Vagina (tissue), 2 donors: ENCODE measurements at regions of chr5 and their contacts with region 1.

Region 1: DNA sequence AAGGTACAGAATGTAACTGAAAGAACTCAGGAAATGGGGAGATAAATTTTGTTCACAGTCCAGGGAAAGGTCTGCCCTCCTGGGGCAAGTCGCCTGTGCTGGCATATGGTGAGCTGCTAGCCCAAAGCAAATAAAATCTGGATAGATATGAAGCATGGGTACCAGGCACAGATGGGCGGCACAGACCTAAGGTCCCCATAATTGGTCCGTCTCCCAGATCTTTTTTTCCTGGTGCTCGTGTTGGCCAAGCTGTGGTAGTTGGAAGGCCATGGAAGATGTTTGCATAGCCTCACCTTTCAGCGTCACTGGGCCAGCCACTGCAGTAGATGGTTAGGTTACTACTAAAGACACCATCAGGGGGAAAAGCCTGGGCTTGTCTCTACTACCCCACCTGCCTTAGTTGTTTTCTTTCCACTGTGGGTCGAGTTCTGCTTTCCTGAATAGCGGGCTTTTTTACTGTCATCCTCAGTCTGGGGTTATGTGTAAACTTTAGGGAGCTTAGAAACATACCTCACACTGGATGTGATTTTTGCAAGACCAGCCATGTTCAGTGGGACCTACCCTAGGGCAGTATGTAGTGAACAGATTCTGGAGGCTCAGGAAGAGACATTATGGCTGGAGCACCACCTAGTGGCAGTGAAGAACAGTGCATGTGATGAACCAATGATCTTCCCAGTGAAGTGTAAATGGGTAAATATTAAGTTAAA is 24.2 kb upstream of the GLRX start:
- DNase-seq: no peak
- H3K4me3 ChIP-seq: no peak overlapping the region
- H3K27ac ChIP-seq: peak overlapping the region; percentile 50
- H3K4me1 ChIP-seq: peaks cover 19% of the 10 kb centered on the region
- H3K27me3 ChIP-seq: no peaks in the 10 kb centered on the region
- CTCF ChIP-seq: peak; percentile 93 to 95 (median 94)
- POLR2A ChIP-seq: no peak

Region 2: DNA sequence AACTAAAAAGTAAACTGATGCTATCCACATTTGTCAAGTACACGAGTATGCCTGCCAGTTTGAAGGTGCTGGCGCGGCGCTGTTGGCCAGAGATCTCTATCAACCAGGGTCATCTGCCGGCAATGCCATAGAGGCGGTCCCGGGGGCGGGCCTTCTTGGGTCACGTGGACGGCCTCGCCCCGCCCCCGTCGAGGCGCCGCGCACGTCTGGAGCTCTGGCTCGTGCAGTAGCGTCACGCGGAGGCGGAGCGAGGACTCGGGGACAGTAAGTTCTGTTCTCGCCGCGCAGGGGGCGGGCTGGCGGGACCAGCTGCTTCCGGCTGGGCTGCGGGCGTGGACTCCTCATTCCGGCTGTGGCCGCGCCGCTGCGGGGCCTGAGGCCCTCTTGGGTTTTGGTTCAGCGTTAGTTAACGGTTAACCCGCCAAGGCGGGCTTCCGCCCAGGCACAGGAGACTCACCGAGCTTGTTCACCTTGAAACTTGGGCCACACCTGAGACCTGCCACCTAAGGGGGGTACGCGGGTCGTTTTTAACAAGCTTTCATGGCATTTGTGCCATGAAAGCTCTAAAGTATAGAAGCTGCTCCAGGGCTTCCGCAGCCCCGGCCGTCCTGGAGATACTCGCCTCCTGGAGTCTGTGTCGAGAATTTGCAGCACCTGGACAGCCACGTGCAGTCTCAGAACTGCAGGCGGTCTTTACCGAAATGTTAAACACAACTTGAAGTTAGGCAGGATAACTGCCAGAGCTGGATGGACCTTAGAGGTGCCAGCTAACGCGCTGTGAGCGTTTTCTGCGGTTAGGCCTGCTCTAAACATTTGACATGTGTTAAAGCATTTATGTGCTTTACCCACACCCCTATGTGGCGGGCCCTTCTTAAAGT is 199.9 kb before region 1 on chr5 and contains the start of gene RFESD:
- intact Hi-C with region 1: loop called (anchors 10 kb)
- DNase-seq: peak in 1 of 2 donors; percentile 98
- H3K4me3 ChIP-seq: peak within 1 kb of the TSS; percentile 43 to 65
- H3K27ac ChIP-seq: peak within 1 kb of the TSS; percentile 97
- H3K4me1 ChIP-seq: peaks cover 9% of the 10 kb centered on the region
- H3K27me3 ChIP-seq: no peaks in the 10 kb centered on the region
- CTCF ChIP-seq: peak in 1 of 3 experiments; percentile 11
- POLR2A ChIP-seq: peak in 1 of 2 donors; percentile 92
- total RNA-seq, gene RFESD: 1.2 TPM

Region 3: GRCh38 chr5:95781101-95781583 is 65.6 kb before region 1 on chr5:
- intact Hi-C with region 1: loop called (anchors 2 kb)
- DNase-seq: no peak
- H3K4me3 ChIP-seq: no peak overlapping the region
- H3K27ac ChIP-seq: peak overlapping the region; percentile 38
- H3K4me1 ChIP-seq: peaks cover 6% of the 10 kb centered on the region
- H3K27me3 ChIP-seq: no peaks in the 10 kb centered on the region
- CTCF ChIP-seq: peak; percentile 89 to 95 (median 90)
- POLR2A ChIP-seq: no peak

Region 4: GRCh38 chr5:95822542-95823181 is 24.0 kb before region 1 on chr5 and contains the start of gene GLRX:
- intact Hi-C with region 1: loop called (anchors 2 kb)
- DNase-seq: no peak
- H3K4me3 ChIP-seq: peak within 1 kb of the TSS; percentile 68 to 84
- H3K27ac ChIP-seq: peak within 1 kb of the TSS; percentile 90
- H3K4me1 ChIP-seq: peaks cover 66% of the 10 kb centered on the region
- H3K27me3 ChIP-seq: no peaks in the 10 kb centered on the region
- CTCF ChIP-seq: no peak
- POLR2A ChIP-seq: peak in 1 of 2 donors; percentile 74
- total RNA-seq, gene GLRX: 63.3 TPM